Endothelial cell of umbilical vein (primary cell): ENCODE measurements at regions of chr11 and their contacts with region 1.

Region 1: GRCh38 chr11:95790123-95790932 is at the start of gene CEP57:
- DNase-seq: peak; percentile 97
- H3K4me3 ChIP-seq: peak within 1 kb of the TSS; percentile 75 to 85 (median 84)
- H3K27ac ChIP-seq: peak within 1 kb of the TSS; percentile 90
- H3K4me1 ChIP-seq: peaks cover 21% of the 10 kb centered on the region
- H3K27me3 ChIP-seq: no peaks in the 10 kb centered on the region
- CTCF ChIP-seq: no peak
- POLR2A ChIP-seq: peak; percentile 79
- total RNA-seq, gene CEP57: 35.2 and 38.5 TPM in 2 replicates

Region 2: DNA sequence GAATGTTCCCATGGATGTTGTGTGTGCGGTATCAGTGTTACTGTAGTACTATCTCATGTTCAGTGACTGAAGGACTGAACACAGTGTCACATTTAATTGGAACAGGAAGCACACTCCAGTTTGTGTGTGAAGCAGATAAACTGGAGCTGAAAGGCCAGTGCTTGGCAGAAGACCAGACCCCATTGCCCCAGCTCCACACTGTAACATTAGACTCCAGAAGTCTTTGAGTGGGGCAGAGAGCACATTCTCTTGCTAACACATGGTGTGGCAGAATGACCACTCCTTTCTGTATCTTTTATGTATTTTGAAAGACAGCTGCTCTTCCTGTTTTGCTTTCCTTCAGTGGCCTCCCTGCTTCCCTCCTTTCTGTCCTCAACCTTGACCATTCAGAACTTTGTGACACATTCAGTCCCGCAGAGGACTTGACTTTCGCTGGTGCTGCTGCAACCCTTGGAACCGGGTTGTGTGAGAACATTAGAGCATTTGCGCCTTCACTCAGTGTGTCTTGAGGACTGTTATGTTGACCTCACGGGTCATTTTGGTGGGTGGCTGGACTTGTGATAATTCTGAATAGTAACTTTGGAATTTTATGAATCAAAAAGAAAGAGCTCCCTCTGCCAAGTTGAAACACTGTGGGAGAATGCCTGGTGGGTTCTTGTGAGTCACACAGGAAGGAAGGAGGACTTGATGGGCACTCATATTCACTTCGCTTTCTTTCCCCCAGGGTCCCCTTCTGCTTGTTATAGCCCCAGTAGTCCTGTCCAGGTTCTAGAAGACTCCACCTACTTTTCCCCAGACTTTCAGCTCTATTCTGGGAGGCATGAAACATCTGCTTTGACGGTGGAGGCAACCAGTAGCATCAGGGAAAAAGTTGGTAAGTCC is 995.8 kb before region 1 on chr11:
- CTCF ChIA-PET with region 1: no interaction called
- POLR2A ChIA-PET with region 1: no interaction called
- dilution Hi-C with region 1: no loop called
- intact Hi-C with region 1: loop called (anchors 10 kb)
- DNase-seq: peak; percentile 93
- H3K4me3 ChIP-seq: peak overlapping the region in 2 of 3 experiments; percentile 4 to 15
- H3K27ac ChIP-seq: peak overlapping the region; percentile 90
- H3K4me1 ChIP-seq: peaks cover 44% of the 10 kb centered on the region
- H3K27me3 ChIP-seq: no peaks in the 10 kb centered on the region
- CTCF ChIP-seq: no peak
- POLR2A ChIP-seq: no peak

Region 3: GRCh38 chr11:95089620-95090542 is 700.4 kb before region 1 on chr11 and contains the start of gene ENDOD1:
- CTCF ChIA-PET with region 1: no interaction called
- POLR2A ChIA-PET with region 1: no interaction called
- dilution Hi-C with region 1: no loop called
- intact Hi-C with region 1: loop called (anchors 5 kb)
- DNase-seq: peak; percentile 87
- H3K4me3 ChIP-seq: peak within 1 kb of the TSS; percentile 31 to 81 (median 67)
- H3K27ac ChIP-seq: peak within 1 kb of the TSS; percentile 39
- H3K4me1 ChIP-seq: peaks cover 10% of the 10 kb centered on the region
- H3K27me3 ChIP-seq: no peaks in the 10 kb centered on the region
- CTCF ChIP-seq: peak in 1 of 2 donors; percentile 5
- POLR2A ChIP-seq: peak; percentile 17
- total RNA-seq, gene ENDOD1: 17.1 and 20.5 TPM in 2 replicates

Region 4: DNA sequence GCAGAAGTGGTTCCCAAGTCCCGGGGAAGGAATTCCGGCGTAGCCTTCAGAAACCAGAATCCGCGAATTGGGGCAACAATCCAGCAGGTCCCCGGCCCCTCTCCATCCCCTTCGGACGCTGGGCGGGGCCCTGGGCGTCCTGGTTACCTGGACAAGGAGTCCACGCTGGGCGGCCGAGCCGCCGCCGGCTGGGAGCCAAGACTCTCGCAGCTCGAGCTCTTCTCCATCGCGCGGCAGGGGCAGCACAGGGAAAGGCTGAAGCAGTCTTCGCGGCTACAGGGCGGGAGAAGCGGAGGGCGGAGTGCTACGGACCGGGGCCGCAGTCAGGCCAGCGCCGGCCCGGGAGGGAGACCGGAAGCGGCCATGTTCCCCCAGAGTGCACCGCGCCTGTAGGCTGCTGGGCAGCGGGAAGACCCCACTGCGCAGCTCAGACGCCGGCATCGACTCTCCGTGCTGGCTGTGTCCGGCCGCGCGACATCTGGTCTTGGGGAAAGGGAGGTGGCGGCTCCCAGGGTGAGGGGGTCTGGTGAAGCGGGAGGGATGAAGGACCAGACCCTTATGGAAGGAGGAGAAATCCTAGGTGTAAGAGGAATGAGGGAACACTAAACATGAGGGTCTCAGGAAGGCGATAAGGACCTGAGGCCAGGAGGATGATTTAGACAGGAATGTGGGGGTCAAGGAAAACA is 133.5 kb after region 1 on chr11 and contains the start of gene MTMR2:
- CTCF ChIA-PET with region 1: no interaction called
- POLR2A ChIA-PET with region 1: interaction called, 5 read pairs
- dilution Hi-C with region 1: no loop called
- intact Hi-C with region 1: loop called (anchors 2 kb)
- DNase-seq: peak; percentile 82
- H3K4me3 ChIP-seq: peak within 1 kb of the TSS; percentile 92 to 99 (median 98)
- H3K27ac ChIP-seq: peak within 1 kb of the TSS; percentile 75
- H3K4me1 ChIP-seq: peaks cover 32% of the 10 kb centered on the region
- H3K27me3 ChIP-seq: no peaks in the 10 kb centered on the region
- CTCF ChIP-seq: no peak
- POLR2A ChIP-seq: peak; percentile 97
- total RNA-seq, gene MTMR2: 46.4 and 49.5 TPM in 2 replicates

Region 5: GRCh38 chr11:95977534-95978174 is 187.3 kb after region 1 on chr11:
- CTCF ChIA-PET with region 1: no interaction called
- POLR2A ChIA-PET with region 1: no interaction called
- dilution Hi-C with region 1: no loop called
- intact Hi-C with region 1: loop called (anchors 2 kb)
- DNase-seq: peak; percentile 78
- H3K4me3 ChIP-seq: no peak overlapping the region
- H3K27ac ChIP-seq: peak overlapping the region; percentile 74
- H3K4me1 ChIP-seq: peaks cover 22% of the 10 kb centered on the region
- H3K27me3 ChIP-seq: no peaks in the 10 kb centered on the region
- CTCF ChIP-seq: no peak
- POLR2A ChIP-seq: no peak

Region 6: GRCh38 chr11:96037405-96037936 is 247.1 kb after region 1 on chr11:
- CTCF ChIA-PET with region 1: no interaction called
- POLR2A ChIA-PET with region 1: no interaction called
- dilution Hi-C with region 1: no loop called
- intact Hi-C with region 1: no loop called
- DNase-seq: no peak
- H3K4me3 ChIP-seq: no peak overlapping the region
- H3K27ac ChIP-seq: no peak overlapping the region
- H3K4me1 ChIP-seq: no peaks in the 10 kb centered on the region
- H3K27me3 ChIP-seq: no peaks in the 10 kb centered on the region
- CTCF ChIP-seq: no peak
- POLR2A ChIP-seq: no peak

Region 7: DNA sequence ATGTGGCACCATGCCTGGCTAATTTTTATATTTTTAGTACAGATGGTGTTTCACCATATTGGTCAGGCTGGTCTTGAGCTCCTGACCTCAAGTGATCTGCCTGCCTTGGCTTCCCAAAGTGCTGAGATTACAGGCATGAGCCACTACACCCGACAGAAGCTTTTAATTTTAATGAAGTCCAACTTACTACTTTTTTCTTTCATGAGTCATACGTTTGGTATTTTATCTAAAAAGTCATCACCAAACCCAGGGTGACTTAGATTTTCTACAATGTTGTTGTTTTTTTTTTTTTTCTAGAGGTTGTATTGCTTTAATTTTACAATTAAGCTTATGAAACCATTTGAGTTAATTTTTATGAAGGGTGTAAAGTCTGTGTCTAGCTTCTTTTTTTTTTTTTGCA is 634.4 kb after region 1 on chr11:
- CTCF ChIA-PET with region 1: interaction called, 7 read pairs
- POLR2A ChIA-PET with region 1: interaction called, 3 read pairs
- dilution Hi-C with region 1: no loop called
- intact Hi-C with region 1: loop called (anchors 1 kb)
- DNase-seq: peak; percentile 51
- H3K4me3 ChIP-seq: no peak overlapping the region
- H3K27ac ChIP-seq: no peak overlapping the region
- H3K4me1 ChIP-seq: peaks cover 2% of the 10 kb centered on the region
- H3K27me3 ChIP-seq: peaks cover 0 to 17% of the 10 kb centered on the region in 2 experiments
- CTCF ChIP-seq: no peak
- POLR2A ChIP-seq: no peak